SK-N-SH (cell line): ENCODE measurements at regions of chr19 and their contacts with region 1.

Region 1: GRCh38 chr19:41310033-41310758 is at the start of gene CCDC97:
- DNase-seq: peak; percentile 94
- H3K4me3 ChIP-seq: peak within 1 kb of the TSS; percentile 69 to 80
- H3K27ac ChIP-seq: peak within 1 kb of the TSS; percentile 95
- H3K4me1 ChIP-seq: peaks cover 14 to 19% of the 10 kb centered on the region in 2 experiments; a peak in 3 of 4 replicates
- H3K27me3 ChIP-seq: no peaks in the 10 kb centered on the region
- CTCF ChIP-seq: no peak
- EP300 ChIP-seq: peak in 1 of 2 experiments; percentile 49; a peak in 1 of 4 replicates
- RAD21 ChIP-seq: no peak
- polyA plus RNA-seq, gene CCDC97: 8.7 and 9.6 TPM in 2 replicates

Region 2: DNA sequence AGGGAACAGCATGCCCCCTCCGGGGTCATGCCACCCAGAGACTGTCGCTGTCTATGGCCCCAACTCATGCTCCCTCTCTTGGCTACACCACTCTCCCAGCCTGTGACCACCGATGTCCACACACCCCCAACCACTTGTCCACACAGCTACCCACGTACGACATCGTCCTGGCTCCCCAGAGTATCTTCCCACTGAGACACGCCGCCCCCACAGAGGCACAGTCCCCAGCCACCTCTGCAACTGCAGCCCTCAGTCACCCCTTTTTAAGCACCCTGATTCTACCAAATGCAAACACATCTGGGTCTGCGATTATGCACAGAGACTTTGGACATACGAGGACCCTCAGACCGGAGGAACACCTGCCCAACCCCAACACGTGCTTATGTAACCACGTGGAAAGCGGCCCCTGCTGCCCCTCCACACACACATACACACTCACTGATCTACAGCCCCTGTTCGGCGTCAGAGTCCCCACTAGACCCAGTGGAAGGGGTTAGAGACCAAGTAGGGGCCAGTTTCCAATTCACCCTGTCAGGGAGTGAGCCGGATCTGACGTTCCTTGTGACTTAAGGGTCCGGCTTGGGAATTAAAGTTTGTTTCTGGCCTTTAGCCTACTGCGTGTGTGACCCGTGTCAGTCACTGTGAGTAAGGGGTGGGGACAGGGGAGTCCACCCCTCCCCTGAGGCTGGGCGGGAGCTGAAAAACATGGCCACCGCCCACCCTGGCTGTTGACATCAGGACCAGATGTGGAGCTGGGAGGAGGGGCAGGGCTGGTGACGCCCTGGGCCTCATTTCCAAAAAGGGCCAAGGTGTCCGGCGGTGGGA is 103.1 kb before region 1 on chr19:
- CTCF ChIA-PET with region 1: interaction called, 16 read pairs
- POLR2A ChIA-PET with region 1: no interaction called
- DNase-seq: no peak
- H3K4me3 ChIP-seq: no peak overlapping the region
- H3K27ac ChIP-seq: no peak overlapping the region
- H3K4me1 ChIP-seq: no peaks in the 10 kb centered on the region
- H3K27me3 ChIP-seq: no peaks in the 10 kb centered on the region
- CTCF ChIP-seq: no peak
- EP300 ChIP-seq: no peak
- RAD21 ChIP-seq: no peak

Region 3: DNA sequence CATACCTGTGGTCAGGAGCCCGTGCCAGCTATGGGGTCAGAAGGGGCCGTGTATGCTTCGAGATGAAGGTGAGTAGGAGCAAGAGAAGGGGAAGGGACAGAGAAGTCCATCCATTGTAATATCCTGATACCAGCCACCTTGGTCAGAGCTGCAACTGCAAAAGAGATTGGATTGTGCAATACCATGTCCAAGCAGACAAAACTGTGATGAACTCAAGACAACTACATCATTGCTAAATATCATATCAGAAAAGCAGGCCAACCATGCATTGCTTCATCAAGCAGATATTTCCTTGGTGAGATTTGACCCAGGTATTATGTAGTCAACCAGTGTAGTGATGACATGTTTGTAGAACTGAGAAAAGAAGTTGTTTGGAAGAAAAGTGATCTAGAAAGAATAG is 34.0 kb before region 1 on chr19:
- CTCF ChIA-PET with region 1: interaction called, 11 read pairs
- POLR2A ChIA-PET with region 1: no interaction called
- DNase-seq: no peak
- H3K4me3 ChIP-seq: no peak overlapping the region
- H3K27ac ChIP-seq: no peak overlapping the region
- H3K4me1 ChIP-seq: no peaks in the 10 kb centered on the region
- H3K27me3 ChIP-seq: no peaks in the 10 kb centered on the region
- CTCF ChIP-seq: no peak
- EP300 ChIP-seq: no peak
- RAD21 ChIP-seq: no peak

Region 4: DNA sequence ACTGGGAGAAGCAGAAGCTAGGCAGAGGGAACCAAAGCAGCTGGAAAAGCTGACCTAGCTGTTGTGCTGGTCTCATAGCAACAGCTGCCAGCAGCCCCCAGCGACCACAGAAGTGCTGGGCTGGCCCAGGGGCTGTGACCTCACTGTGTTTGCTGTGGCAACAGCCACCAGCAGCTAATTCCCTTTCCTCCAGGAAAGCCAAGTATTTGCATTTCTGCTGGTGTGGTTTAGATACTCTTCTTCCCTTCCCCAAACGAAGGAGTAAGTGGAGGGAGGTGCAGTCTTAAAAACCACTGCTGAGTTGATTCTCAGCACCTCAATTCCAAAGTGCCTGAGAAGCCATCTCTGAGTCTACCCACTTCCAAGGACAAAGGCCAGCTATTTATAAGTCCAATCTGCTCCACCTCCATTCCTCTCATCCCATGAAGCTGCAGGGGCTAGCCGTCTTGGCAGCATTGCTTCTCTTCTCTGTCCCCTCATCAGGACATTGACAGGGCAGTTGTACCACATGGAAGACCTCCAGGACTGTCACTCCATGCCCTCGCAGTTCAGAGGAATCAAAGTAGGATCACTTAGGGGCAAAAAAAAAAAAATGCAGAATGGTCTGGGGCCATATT is 11.7 kb before region 1 on chr19:
- CTCF ChIA-PET with region 1: interaction called, 105 read pairs
- POLR2A ChIA-PET with region 1: no interaction called
- DNase-seq: no peak
- H3K4me3 ChIP-seq: no peak overlapping the region
- H3K27ac ChIP-seq: peak overlapping the region in 1 of 2 experiments; percentile 80; a peak in 2 of 4 replicates
- H3K4me1 ChIP-seq: no peaks in the 10 kb centered on the region
- H3K27me3 ChIP-seq: no peaks in the 10 kb centered on the region
- CTCF ChIP-seq: no peak
- EP300 ChIP-seq: no peak
- RAD21 ChIP-seq: no peak

Region 5: GRCh38 chr19:41353466-41354342 is 43.5 kb after region 1 on chr19 and contains the start of gene TGFB1:
- CTCF ChIA-PET with region 1: interaction called, 21 read pairs
- POLR2A ChIA-PET with region 1: no interaction called
- DNase-seq: peak; percentile 96
- H3K4me3 ChIP-seq: peak within 1 kb of the TSS; percentile 65 to 99
- H3K27ac ChIP-seq: peak within 1 kb of the TSS; percentile 11 to 79
- H3K4me1 ChIP-seq: peaks cover 0 to 34% of the 10 kb centered on the region in 2 experiments; a peak in 2 of 4 replicates
- H3K27me3 ChIP-seq: no peaks in the 10 kb centered on the region
- CTCF ChIP-seq: peak; percentile 88
- EP300 ChIP-seq: no peak
- RAD21 ChIP-seq: peak; percentile 52
- polyA plus RNA-seq, gene TGFB1: 13.5 and 25.5 TPM in 2 replicates

Region 6: GRCh38 chr19:41386442-41386841 is 76.2 kb after region 1 on chr19:
- CTCF ChIA-PET with region 1: no interaction called
- POLR2A ChIA-PET with region 1: no interaction called
- DNase-seq: no peak
- H3K4me3 ChIP-seq: no peak overlapping the region
- H3K27ac ChIP-seq: no peak overlapping the region
- H3K4me1 ChIP-seq: no peaks in the 10 kb centered on the region
- H3K27me3 ChIP-seq: no peaks in the 10 kb centered on the region
- CTCF ChIP-seq: no peak
- EP300 ChIP-seq: no peak
- RAD21 ChIP-seq: no peak

Region 7: DNA sequence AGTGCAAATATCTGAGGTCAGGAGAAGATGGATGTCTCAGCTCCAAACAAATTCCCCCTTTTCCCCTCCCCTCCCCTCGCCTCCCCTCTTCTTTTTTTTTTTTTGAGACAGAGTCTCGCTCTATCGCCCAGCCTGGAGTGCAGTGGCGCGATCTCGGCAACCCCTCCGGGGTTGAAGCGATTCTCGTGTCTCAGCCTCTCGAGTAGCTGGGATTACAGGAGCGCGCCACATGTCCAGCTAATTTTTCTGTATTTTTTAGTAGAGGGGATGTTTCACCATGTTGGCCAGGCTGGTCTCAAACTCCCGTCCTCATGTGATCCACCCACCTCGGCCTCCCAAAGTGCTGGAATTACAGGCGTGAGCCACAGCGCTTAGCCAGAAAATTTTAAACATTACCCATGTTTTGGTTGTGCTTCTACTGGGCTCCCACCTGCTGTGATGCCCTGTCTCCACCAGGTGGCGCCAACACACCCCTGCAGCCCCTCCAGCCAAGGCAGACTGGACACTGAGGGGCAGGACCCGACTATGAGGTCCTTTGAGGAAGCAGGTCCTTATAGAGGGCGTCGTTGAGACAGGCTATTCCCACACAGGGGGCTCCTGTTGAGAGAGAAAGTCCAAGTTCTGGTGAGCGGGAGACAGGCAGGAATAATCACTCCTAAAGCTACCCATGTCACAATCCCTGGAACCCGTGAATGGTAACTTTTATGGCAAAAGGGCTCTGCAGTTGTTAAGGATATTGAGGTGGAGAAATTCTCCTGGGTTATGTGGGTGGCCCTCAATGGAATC is 139.1 kb after region 1 on chr19:
- CTCF ChIA-PET with region 1: no interaction called
- POLR2A ChIA-PET with region 1: no interaction called
- DNase-seq: peak; percentile 89
- H3K4me3 ChIP-seq: peak overlapping the region in 1 of 2 experiments; percentile 46; a peak in 1 of 4 replicates
- H3K27ac ChIP-seq: no peak overlapping the region
- H3K4me1 ChIP-seq: no peaks in the 10 kb centered on the region
- H3K27me3 ChIP-seq: peaks cover 80% of the 10 kb centered on the region
- CTCF ChIP-seq: peak; percentile 98
- EP300 ChIP-seq: no peak
- RAD21 ChIP-seq: peak; percentile 79